Right ventricle myocardium inferior (tissue), 1 donor: ENCODE measurements at regions of chr12 and their contacts with region 1.

Region 1: GRCh38 chr12:52023182-52023975 is 16.6 kb downstream of the TAMALIN start:
- DNase-seq: peak; percentile 96
- ATAC-seq: peak; percentile 62

Region 2: GRCh38 chr12:51994959-51995358 is 28.4 kb before region 1 on chr12:
- intact Hi-C with region 1: loop called (anchors 1 kb)
- DNase-seq: no peak
- ATAC-seq: no peak

Region 3: DNA sequence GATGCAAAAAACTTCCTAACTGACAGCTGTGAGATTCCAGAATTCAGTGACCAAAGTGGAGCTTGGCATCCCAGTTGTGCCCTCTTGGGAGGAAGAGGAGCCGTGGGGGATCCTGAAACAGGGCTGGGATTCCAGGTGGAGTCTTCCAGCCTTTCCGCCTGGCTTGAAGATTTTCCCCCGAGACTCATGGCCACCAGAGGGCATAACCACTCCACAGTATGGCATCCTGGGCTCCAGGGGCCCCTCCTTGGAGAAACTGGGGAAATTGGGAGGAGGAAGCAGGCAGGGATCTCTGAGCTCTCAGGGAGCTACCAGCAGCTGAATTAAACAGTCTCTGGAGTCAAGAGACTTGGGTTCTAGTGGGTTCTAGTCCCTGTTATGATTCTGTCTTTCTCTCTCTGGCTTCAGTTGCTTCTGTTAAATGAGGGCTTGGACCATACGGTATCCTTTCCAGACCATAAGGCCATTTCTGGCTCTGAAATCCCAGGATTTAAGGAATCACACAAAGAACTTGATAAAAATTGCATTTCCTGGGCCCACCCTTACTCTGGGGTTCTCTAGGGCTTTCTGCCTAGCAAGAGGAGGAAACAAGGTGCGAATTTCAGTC is 19.2 kb before region 1 on chr12:
- intact Hi-C with region 1: loop called (anchors 1 kb)
- DNase-seq: no peak
- ATAC-seq: no peak

Region 4: DNA sequence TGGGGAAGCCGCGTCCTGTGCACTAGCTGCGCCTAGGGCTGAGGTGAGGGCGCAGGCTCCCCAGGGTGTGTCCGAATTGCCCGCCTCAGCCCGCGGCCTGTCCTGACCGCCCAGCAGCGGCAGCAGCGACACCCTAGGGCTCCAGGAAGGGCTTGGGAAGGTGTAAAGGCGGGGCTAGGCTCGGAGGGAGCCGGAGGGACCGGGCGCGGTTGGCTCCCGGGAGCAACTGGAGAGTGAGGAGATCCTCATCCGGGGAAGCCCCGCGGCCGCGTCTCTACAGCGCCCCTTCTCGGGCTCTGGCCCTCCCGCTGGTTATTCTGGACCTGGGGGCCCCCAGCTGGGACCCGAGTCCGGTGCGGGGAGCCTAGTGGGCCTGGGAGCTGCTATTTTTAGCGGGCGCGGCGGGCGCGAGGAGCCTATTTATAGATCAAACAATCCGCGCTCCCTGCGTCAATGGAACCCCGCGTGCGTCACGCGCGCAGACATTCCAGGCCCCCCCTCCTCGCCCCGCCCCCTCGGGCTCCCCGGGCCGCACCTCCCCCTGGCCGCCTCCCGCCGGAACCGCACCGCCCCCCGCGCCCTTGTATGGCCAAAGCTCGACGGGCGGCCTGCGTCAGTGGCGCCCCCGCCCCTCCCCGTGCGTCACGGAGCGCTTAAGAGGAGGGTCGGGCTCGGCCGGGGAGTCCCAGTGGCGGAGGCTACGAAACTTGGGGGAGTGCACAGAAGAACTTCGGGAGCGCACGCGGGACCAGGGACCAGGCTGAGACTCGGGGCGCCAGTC is 27.6 kb after region 1 on chr12 and contains the start of gene NR4A1:
- intact Hi-C with region 1: loop called (anchors 1 kb)
- DNase-seq: peak; percentile 99
- ATAC-seq: peak; percentile 91
- total RNA-seq, gene NR4A1: 40.6 TPM

Region 5: GRCh38 chr12:52069327-52070184 is 46.2 kb after region 1 on chr12 and contains the start of gene ATG101:
- intact Hi-C with region 1: loop called (anchors 1 kb)
- DNase-seq: peak; percentile 93
- ATAC-seq: peak; percentile 99
- total RNA-seq, gene ATG101: 24.9 TPM

Region 6: GRCh38 chr12:52082988-52083637 is 59.7 kb after region 1 on chr12:
- intact Hi-C with region 1: loop called (anchors 1 kb)
- DNase-seq: no peak
- ATAC-seq: peak; percentile 46

Region 7: GRCh38 chr12:52121824-52122539 is 98.6 kb after region 1 on chr12:
- intact Hi-C with region 1: loop called (anchors 2 kb)
- DNase-seq: peak; percentile 87
- ATAC-seq: peak; percentile 32

Region 8: GRCh38 chr12:52327052-52327829 is 303.9 kb after region 1 on chr12:
- intact Hi-C with region 1: no loop called
- DNase-seq: no peak
- ATAC-seq: peak; percentile 81

Region 9: DNA sequence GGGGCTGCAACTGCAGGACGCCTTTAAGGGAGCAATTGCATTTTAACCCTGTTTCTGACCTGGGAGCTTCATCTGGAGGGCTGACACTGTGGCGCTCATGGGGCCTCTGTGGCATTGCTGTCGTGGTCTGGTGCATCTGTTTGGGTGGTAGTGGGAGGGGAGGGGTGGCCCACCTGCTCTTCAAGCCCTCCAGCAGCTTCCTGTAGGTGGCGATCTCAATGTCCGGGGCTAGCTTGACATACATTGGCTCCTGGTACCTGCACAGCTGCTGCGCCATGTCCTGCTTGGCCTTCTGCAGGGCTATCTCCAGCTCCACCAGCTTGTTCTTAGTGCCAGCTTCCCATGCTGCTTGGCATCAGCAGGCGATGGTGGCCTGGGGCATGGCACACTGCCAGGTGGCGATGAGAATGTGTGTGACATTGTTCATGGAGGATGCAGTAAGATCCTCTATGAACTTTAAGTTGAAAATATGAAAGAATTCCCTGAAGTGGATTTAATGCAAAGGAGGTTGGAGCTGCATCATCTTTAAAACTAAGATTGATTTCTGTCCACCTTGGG is 390.5 kb after region 1 on chr12:
- intact Hi-C with region 1: no loop called
- DNase-seq: no peak
- ATAC-seq: no peak